SK-N-SH (cell line): ENCODE measurements at regions of chr7 and their contacts with region 1.

Region 1: GRCh38 chr7:141654551-141654950 is 47.4 kb downstream of the DENND11 start:
- DNase-seq: peak; percentile 87
- H3K4me3 ChIP-seq: no peak overlapping the region; a peak in 1 of 4 replicates
- H3K27ac ChIP-seq: peak overlapping the region; percentile 12 to 64; a peak in 3 of 4 replicates
- H3K4me1 ChIP-seq: peaks cover 0 to 11% of the 10 kb centered on the region in 2 experiments; a peak in 2 of 4 replicates
- H3K27me3 ChIP-seq: no peaks in the 10 kb centered on the region
- CTCF ChIP-seq: peak; percentile 94
- EP300 ChIP-seq: peak in 1 of 2 experiments; percentile 13; a peak in 1 of 4 replicates
- RAD21 ChIP-seq: peak; percentile 91

Region 2: GRCh38 chr7:141014524-141015395 is 639.8 kb before region 1 on chr7 and contains the start of gene MRPS33:
- CTCF ChIA-PET with region 1: interaction called, 24 read pairs
- POLR2A ChIA-PET with region 1: no interaction called
- DNase-seq: peak; percentile 96
- H3K4me3 ChIP-seq: peak within 1 kb of the TSS; percentile 72 to 96
- H3K27ac ChIP-seq: peak within 1 kb of the TSS; percentile 78 to 93
- H3K4me1 ChIP-seq: peaks cover 6 to 16% of the 10 kb centered on the region in 2 experiments; a peak in 3 of 4 replicates
- H3K27me3 ChIP-seq: no peaks in the 10 kb centered on the region
- CTCF ChIP-seq: peak; percentile 86
- EP300 ChIP-seq: no peak; a peak in 2 of 4 replicates
- RAD21 ChIP-seq: no peak; the same call in 1 of the 2 replicates
- polyA plus RNA-seq, gene MRPS33: 88.8 and 95.5 TPM in 2 replicates

Region 3: DNA sequence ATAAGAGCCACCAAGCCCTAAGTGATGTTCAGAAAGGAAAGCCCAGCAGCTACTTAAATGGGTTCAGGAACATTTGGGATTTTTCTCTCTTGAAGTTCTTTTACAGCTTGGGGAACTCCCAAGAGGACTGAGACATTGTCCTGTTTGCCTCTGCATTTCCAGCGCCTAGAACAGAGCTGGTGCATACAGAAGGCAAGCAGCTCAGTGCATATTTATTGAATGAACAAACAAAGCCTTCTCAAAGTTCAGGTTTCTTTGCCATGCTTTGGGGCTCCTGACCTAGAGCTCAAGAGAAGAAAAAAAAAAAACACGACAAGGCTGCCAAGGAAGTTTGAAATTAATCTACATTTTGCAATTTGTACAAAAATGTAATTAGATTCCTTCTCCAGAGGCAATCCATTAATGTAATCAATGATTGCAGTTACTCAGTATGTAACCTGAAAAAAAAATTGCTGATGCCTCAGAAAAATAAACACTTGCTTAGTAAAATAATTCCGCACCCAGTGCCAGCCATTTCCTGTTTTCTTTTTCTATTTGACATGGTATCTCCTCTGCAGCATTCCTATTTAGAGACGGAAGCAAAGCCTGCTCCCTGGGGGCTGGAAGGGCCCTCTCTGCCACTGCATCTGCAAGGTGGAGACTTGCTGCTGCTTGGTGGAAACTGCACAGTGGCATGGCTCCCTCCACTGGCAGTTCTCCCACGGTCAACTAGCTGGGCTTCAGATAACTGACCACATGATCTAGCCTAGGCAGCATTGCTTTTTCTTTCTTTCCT is 423.3 kb before region 1 on chr7:
- CTCF ChIA-PET with region 1: interaction called, 11 read pairs
- POLR2A ChIA-PET with region 1: no interaction called
- DNase-seq: peak; percentile 72
- H3K4me3 ChIP-seq: no peak overlapping the region
- H3K27ac ChIP-seq: no peak overlapping the region
- H3K4me1 ChIP-seq: peaks cover 0 to 6% of the 10 kb centered on the region in 2 experiments; a peak in 2 of 4 replicates
- H3K27me3 ChIP-seq: no peaks in the 10 kb centered on the region
- CTCF ChIP-seq: no peak
- EP300 ChIP-seq: no peak
- RAD21 ChIP-seq: peak; percentile 86

Region 4: DNA sequence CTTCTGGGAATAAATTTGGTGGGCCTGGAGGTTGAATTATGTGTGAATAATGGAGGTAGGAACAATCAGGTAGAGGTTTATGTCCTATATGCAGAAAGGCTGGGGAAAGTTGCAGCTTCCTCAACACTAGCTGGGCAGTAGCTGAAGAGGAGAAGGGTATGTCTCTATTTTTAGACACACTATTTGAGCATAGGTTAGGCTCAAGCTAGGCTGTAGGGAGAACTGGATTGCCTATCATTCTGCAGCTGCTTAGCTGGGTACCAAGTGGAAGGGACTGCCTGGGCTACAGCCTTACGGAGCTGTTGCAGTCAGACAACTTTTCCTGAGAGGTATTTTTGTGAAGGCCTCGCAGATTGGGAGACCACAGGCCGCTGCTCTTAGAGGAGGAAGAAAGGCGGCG is 20.5 kb before region 1 on chr7:
- CTCF ChIA-PET with region 1: interaction called, 26 read pairs
- POLR2A ChIA-PET with region 1: no interaction called
- DNase-seq: no peak
- H3K4me3 ChIP-seq: no peak overlapping the region
- H3K27ac ChIP-seq: no peak overlapping the region
- H3K4me1 ChIP-seq: no peaks in the 10 kb centered on the region
- H3K27me3 ChIP-seq: no peaks in the 10 kb centered on the region
- CTCF ChIP-seq: no peak
- EP300 ChIP-seq: no peak
- RAD21 ChIP-seq: no peak

Region 5: GRCh38 chr7:141674702-141675101 is 20.2 kb after region 1 on chr7:
- CTCF ChIA-PET with region 1: interaction called, 39 read pairs
- POLR2A ChIA-PET with region 1: no interaction called
- DNase-seq: peak; percentile 61
- H3K4me3 ChIP-seq: no peak overlapping the region
- H3K27ac ChIP-seq: peak overlapping the region in 1 of 2 experiments; percentile 37; a peak in 1 of 4 replicates
- H3K4me1 ChIP-seq: no peaks in the 10 kb centered on the region
- H3K27me3 ChIP-seq: no peaks in the 10 kb centered on the region
- CTCF ChIP-seq: peak; percentile 56
- EP300 ChIP-seq: no peak
- RAD21 ChIP-seq: 0 out of 2 replicates have a peak, but pooled peaks have one; percentile 18

Region 6: GRCh38 chr7:141737834-141738591 is 83.5 kb after region 1 on chr7 and contains the start of gene SSBP1:
- CTCF ChIA-PET with region 1: interaction called, 124 read pairs
- POLR2A ChIA-PET with region 1: interaction called, 7 read pairs
- DNase-seq: peak; percentile 88
- H3K4me3 ChIP-seq: peak within 1 kb of the TSS; percentile 94 to 95
- H3K27ac ChIP-seq: peak within 1 kb of the TSS; percentile 69 to 93
- H3K4me1 ChIP-seq: peaks cover 6 to 26% of the 10 kb centered on the region in 2 experiments; a peak in 2 of 4 replicates
- H3K27me3 ChIP-seq: no peaks in the 10 kb centered on the region
- CTCF ChIP-seq: peak; percentile 99
- EP300 ChIP-seq: peak in 1 of 2 experiments; percentile 59; a peak in 2 of 4 replicates
- RAD21 ChIP-seq: peak; percentile 61
- polyA plus RNA-seq, gene SSBP1: 191 and 212 TPM in 2 replicates

Region 7: GRCh38 chr7:141992156-141992555 is 337.6 kb after region 1 on chr7:
- CTCF ChIA-PET with region 1: no interaction called
- POLR2A ChIA-PET with region 1: no interaction called
- DNase-seq: no peak
- H3K4me3 ChIP-seq: no peak overlapping the region
- H3K27ac ChIP-seq: no peak overlapping the region
- H3K4me1 ChIP-seq: 0 out of 4 replicates have a peak, but pooled peaks cover 0 to 4% of the 10 kb centered on the region in 2 experiments
- H3K27me3 ChIP-seq: no peaks in the 10 kb centered on the region
- CTCF ChIP-seq: no peak
- EP300 ChIP-seq: no peak
- RAD21 ChIP-seq: no peak

Region 8: GRCh38 chr7:142338633-142339501 is 684.3 kb after region 1 on chr7:
- CTCF ChIA-PET with region 1: no interaction called
- POLR2A ChIA-PET with region 1: no interaction called
- DNase-seq: no peak
- H3K4me3 ChIP-seq: peak overlapping the region in 1 of 2 experiments; percentile 27; a peak in 1 of 4 replicates
- H3K27ac ChIP-seq: no peak overlapping the region
- H3K4me1 ChIP-seq: no peaks in the 10 kb centered on the region
- H3K27me3 ChIP-seq: peaks cover 47% of the 10 kb centered on the region; the same call in 1 of the 2 replicates
- CTCF ChIP-seq: peak; percentile 46
- EP300 ChIP-seq: no peak
- RAD21 ChIP-seq: 0 out of 2 replicates have a peak, but pooled peaks have one; percentile 8